Left cardiac atrium (tissue), 4 donors: ENCODE measurements at regions of chr21 and their contacts with region 1.

Region 1: GRCh38 chr21:36567216-36567885 is 87.4 kb upstream of the CLDN14 start:
- DNase-seq: no peak
- ATAC-seq: no peak

Region 2: DNA sequence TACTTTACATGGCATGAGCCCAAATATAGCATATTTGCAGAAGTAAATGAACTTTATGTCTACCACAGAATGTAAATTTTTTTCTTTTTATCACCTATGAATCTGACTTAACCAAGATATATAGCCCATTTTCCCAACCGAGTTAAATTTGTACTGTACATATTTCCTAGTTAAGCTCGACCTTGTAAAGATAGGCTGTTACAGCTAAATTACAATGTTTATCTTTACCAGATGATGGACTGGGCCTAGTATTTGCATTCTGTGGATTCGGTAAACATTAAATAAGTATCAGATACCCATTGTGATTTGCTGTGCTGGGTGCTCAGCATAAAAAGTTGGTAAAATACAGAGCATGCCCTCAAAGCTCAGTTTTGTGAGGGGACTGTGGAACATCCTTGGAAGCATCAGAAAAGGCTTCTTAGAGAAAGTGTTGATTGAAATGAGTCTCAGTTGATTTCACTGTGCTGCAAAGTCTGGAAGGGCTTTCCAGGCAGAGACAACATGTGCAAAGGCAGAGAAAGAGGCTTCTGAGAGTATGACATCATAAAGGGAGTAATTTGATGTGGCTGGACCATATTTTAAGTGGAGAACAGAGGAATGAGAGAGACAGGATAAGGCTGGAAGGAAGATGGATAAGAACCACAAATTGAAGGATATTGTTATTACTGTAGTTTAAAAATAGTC is 219.9 kb before region 1 on chr21:
- intact Hi-C with region 1: no loop called
- DNase-seq: no peak
- ATAC-seq: peak in 1 of 2 donors; percentile 29

Region 3: GRCh38 chr21:36385233-36386030 is 181.9 kb before region 1 on chr21 and contains the start of gene CHAF1B:
- intact Hi-C with region 1: no loop called
- DNase-seq: peak; percentile 78
- ATAC-seq: peak; percentile 95 to 98
- total RNA-seq, gene CHAF1B: 0.84 to 1.4 TPM

Region 4: GRCh38 chr21:36528716-36529115 is 38.6 kb before region 1 on chr21:
- intact Hi-C with region 1: loop called in 1 of 2 experiments (anchors 2 kb)
- DNase-seq: no peak
- ATAC-seq: no peak

Region 5: DNA sequence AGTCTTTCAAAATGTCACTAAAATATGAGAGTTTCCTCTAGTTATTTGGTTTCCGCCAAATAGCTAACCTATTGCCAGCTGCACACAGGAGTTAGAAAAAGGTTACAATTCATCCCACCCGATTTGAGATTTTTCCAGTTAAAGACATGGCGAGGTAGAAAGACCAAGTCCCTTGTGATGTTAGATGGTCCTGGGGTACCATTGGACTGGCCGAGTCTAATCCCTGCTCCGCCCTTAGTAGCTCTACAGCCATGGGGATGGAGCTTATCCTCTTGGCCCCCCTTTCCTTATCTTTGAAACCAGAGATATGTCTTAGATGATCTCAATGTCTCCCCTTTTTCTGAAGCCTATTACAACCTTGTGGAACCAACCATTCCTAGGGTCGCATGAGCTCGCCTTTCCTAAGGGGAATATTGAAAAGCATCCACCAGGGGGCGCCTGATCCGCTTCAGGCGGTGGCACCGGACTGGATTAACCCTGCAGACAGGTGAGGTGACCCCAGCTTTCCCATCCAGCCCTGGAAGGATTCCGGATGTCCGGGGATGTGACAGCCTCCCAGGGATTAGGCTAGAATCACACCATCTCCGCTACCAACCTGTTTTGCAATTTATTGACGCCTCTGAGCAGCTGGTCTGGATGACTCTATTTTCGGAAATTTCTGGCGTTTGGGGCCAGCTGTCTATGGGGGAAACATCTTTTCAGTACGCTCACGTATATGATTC is 63.3 kb after region 1 on chr21:
- intact Hi-C with region 1: no loop called
- DNase-seq: peak; percentile 59
- ATAC-seq: peak; percentile 44 to 60

Region 6: DNA sequence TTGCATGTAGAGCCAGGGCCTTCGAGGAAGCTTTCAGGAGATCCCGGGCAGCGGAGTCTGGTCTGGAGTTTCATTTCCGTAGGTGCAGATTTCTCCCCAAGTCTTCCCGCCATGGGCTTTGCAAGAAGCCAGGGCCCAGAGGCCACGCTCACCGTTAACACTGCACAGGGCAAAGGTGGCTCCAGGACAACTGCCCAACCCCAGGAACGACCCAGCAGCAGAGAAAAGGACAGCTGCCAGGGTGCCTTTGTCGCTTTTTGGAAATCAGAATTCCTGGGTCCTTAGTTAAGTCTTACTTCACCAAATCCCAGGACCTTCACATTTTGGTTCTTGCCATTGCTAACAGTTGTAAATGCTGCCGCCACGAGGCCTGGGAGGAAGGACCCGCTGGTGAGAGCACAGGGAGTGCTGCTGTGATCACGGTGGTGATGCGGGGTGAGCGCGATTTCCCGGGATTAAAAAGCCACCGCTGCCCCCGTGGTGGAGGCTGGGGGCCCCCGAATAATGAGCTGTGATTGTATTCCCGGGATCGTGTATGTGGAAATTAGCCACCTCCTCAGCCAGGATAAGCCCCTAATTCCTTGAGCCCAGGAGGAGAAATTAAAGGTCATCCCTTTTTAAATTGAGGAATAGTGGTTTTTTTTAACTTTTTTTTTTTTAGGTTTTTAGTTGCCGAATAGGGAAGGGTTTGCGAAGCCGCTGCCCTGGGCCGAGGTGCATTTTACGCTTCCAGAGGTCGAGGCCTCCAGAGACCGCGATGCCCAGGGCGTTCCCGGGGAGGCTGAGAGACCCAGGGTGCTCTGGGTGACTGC is 139.8 kb after region 1 on chr21:
- intact Hi-C with region 1: no loop called
- DNase-seq: no peak
- ATAC-seq: no peak